Transverse colon (tissue), 4 donors: ENCODE measurements at regions of chr6 and their contacts with region 1.

Region 1: GRCh38 chr6:139355172-139355571 is 19.3 kb downstream of the CITED2 start:
- DNase-seq: no peak
- H3K4me3 ChIP-seq: no peak overlapping the region
- H3K27ac ChIP-seq: no peak overlapping the region
- H3K4me1 ChIP-seq: no peaks in the 10 kb centered on the region
- H3K27me3 ChIP-seq: no peaks in the 10 kb centered on the region
- CTCF ChIP-seq: no peak
- EP300 ChIP-seq: no peak
- POLR2A ChIP-seq: no peak

Region 2: GRCh38 chr6:139080255-139080920 is 274.8 kb before region 1 on chr6:
- in situ Hi-C with region 1: no loop called
- intact Hi-C with region 1: no loop called
- DNase-seq: no peak
- H3K4me3 ChIP-seq: no peak overlapping the region
- H3K27ac ChIP-seq: no peak overlapping the region
- H3K4me1 ChIP-seq: no peaks in the 10 kb centered on the region
- H3K27me3 ChIP-seq: no peaks in the 10 kb centered on the region
- CTCF ChIP-seq: no peak
- EP300 ChIP-seq: no peak
- POLR2A ChIP-seq: no peak

Region 3: GRCh38 chr6:139117734-139118133 is 237.4 kb before region 1 on chr6:
- in situ Hi-C with region 1: loop called in 2 of 4 experiments (anchors 10 kb)
- intact Hi-C with region 1: no loop called
- DNase-seq: no peak
- H3K4me3 ChIP-seq: no peak overlapping the region
- H3K27ac ChIP-seq: no peak overlapping the region
- H3K4me1 ChIP-seq: no peaks in the 10 kb centered on the region
- H3K27me3 ChIP-seq: no peaks in the 10 kb centered on the region
- CTCF ChIP-seq: no peak
- EP300 ChIP-seq: no peak
- POLR2A ChIP-seq: no peak

Region 4: DNA sequence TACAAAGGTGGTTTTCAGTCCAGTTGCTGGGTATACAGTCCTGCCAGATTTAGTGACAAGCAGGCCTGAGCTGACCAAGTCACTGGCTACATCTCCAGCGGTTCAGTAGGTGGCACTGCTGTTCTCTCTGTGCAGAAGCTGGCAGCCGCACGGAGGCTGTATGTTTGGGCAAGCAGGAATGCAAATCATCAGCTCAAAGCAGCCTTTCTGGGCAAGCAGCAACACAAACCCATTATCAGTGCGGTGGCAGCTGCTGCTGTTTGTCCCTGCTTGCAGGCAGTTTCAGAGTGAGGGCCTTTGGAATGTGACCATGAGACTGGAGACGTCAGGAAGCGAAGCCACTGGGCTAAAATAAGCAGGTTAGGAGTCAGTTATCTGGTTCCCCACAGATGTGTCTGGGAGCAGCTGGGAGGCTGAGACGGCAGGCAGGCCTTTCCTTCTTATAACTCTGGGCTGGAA is 135.9 kb before region 1 on chr6:
- in situ Hi-C with region 1: loop called in 3 of 4 experiments (anchors 10 kb)
- intact Hi-C with region 1: loop called (anchors 5 kb)
- DNase-seq: peak; percentile 82
- H3K4me3 ChIP-seq: no peak overlapping the region
- H3K27ac ChIP-seq: peak overlapping the region in 2 of 4 donors; percentile 4 to 69
- H3K4me1 ChIP-seq: peaks cover 0 to 5% (median 4%) of the 10 kb centered on the region in 4 donors
- H3K27me3 ChIP-seq: no peaks in the 10 kb centered on the region
- CTCF ChIP-seq: peak; percentile 66 to 79 (median 69)
- EP300 ChIP-seq: no peak
- POLR2A ChIP-seq: no peak

Region 5: GRCh38 chr6:139407718-139408222 is 52.6 kb after region 1 on chr6:
- in situ Hi-C with region 1: no loop called
- intact Hi-C with region 1: no loop called
- DNase-seq: no peak
- H3K4me3 ChIP-seq: no peak overlapping the region
- H3K27ac ChIP-seq: no peak overlapping the region
- H3K4me1 ChIP-seq: no peaks in the 10 kb centered on the region
- H3K27me3 ChIP-seq: no peaks in the 10 kb centered on the region
- CTCF ChIP-seq: no peak
- EP300 ChIP-seq: no peak
- POLR2A ChIP-seq: no peak